ENCODE measurements at regions of chr17 and their contacts with region 1.

Region 1: GRCh38 chr17:50783193-50783660 is 15.9 kb upstream of the ANKRD40CL start:
- DNase-seq: peak; percentile 87
- H3K4me3 ChIP-seq: no peak overlapping the region
- H3K27ac ChIP-seq: no peak overlapping the region
- H3K4me1 ChIP-seq: peaks cover 5% of the 10 kb centered on the region
- H3K27me3 ChIP-seq: peaks cover 0 to 2% of the 10 kb centered on the region in 2 experiments
- CTCF ChIP-seq: peak; percentile 97 to 99
- POLR2A ChIP-seq: no peak

Region 2: GRCh38 chr17:50491505-50491904 is 291.7 kb before region 1 on chr17:
- CTCF ChIA-PET with region 1: no interaction called
- POLR2A ChIA-PET with region 1: no interaction called
- dilution Hi-C with region 1: no loop called
- intact Hi-C with region 1: no loop called
- DNase-seq: peak; percentile 32
- H3K4me3 ChIP-seq: no peak overlapping the region
- H3K27ac ChIP-seq: no peak overlapping the region
- H3K4me1 ChIP-seq: no peaks in the 10 kb centered on the region
- H3K27me3 ChIP-seq: peaks cover 0 to 2% of the 10 kb centered on the region in 2 experiments
- CTCF ChIP-seq: no peak
- POLR2A ChIP-seq: no peak

Region 3: GRCh38 chr17:50725769-50726655 is 57.2 kb before region 1 on chr17:
- CTCF ChIA-PET with region 1: no interaction called
- POLR2A ChIA-PET with region 1: no interaction called
- dilution Hi-C with region 1: no loop called
- intact Hi-C with region 1: no loop called
- DNase-seq: no peak
- H3K4me3 ChIP-seq: no peak overlapping the region
- H3K27ac ChIP-seq: no peak overlapping the region
- H3K4me1 ChIP-seq: peaks cover 18% of the 10 kb centered on the region
- H3K27me3 ChIP-seq: no peaks in the 10 kb centered on the region
- CTCF ChIP-seq: no peak
- POLR2A ChIP-seq: no peak

Region 4: GRCh38 chr17:50765454-50766221 is 17.6 kb before region 1 on chr17:
- CTCF ChIA-PET with region 1: interaction called, 30 read pairs
- POLR2A ChIA-PET with region 1: no interaction called
- dilution Hi-C with region 1: no loop called
- intact Hi-C with region 1: no loop called
- DNase-seq: peak; percentile 27
- H3K4me3 ChIP-seq: no peak overlapping the region
- H3K27ac ChIP-seq: no peak overlapping the region
- H3K4me1 ChIP-seq: no peaks in the 10 kb centered on the region
- H3K27me3 ChIP-seq: peaks cover 7 to 9% of the 10 kb centered on the region in 2 experiments
- CTCF ChIP-seq: no peak
- POLR2A ChIP-seq: no peak

Region 5: DNA sequence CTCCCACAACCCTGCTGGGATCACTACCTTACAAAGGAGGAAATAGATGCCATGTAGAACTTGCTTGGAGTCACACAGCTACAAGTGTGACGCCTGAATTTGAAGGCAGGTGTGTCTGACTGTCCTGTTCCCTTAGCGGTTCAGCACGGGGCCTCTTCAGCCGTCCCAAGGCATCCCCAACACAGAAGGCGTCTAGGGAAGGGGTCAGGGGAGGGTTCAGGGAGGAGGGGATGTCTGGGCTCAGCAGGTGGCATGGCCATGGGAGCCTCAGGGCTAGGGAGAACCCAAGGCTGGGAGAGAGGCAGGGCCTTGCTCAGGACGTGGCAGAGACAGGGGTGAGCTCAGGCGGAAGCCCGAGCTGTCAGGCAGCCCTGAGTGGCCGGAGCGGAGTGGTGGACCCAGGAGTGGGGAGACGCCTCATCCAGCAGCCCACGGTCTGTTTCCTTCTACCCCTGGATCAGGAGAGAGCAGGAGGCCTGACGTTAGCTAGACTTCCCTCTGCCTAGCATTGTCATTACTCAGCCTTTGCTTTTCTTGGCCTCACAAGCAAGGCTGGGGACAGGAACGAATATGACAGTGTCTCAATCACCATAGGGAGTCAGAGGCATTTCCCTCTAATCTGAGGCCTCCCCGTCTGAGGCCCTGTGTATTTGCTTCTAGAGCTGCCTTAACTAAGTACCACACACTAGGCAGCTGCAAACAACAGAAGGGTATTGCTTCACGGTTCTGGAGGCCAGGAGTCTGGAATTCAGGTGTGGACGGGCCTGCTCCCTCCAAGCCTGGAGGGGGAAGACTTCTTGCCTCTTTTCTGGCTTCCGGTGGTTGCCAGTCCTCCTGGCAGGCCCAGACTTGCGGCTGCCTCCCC is 15.4 kb after region 1 on chr17:
- CTCF ChIA-PET with region 1: interaction called, 42 read pairs
- POLR2A ChIA-PET with region 1: no interaction called
- dilution Hi-C with region 1: no loop called
- intact Hi-C with region 1: no loop called
- DNase-seq: no peak
- H3K4me3 ChIP-seq: no peak overlapping the region
- H3K27ac ChIP-seq: no peak overlapping the region
- H3K4me1 ChIP-seq: no peaks in the 10 kb centered on the region
- H3K27me3 ChIP-seq: no peaks in the 10 kb centered on the region
- CTCF ChIP-seq: no peak
- POLR2A ChIP-seq: no peak

Region 6: DNA sequence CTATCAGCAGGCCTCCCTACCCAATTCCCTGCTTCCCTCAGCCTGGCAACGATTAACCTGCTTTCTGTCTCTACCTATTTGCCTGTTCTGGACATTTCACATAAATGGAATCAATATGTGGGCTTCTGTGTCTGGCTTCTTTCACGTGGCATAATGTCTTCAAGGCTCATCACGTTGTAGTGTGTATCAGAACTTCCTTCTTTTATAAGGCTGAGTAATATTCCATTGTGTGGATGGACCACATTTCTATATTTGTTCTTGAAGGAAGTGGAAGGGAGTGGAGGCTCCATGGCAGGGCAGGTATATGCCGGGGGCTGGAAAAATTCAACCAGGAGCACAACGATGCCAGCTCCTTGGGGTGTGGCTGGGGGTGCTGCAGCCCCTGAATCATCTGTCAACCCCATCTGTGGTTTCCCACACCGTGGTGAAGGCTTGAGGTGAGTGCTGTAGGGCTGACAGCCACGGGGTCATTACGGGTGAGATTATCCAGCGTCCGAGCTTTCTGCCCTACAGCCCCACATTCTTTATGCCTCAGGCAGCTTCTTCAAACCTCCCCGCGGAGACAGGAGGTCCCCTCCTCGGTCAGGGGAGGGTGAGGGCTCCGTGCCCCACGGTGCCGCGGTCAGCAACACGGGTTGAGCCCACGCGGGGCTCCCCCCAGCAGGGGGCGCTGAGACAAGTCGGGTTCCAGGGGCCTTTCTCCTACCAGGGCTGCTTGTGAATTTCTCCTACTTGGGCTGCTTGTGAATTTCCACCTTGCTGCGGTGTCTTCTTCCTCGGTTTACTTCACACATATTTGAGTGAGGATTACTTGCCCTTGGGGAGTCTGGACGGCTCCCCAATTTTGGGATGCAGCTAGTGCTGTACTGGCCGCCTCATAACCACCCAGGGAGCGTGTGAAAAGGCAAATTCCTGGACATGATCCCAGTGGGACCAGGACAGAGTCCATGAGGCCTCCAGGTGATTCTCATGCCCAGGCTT is 33.8 kb after region 1 on chr17:
- CTCF ChIA-PET with region 1: interaction called, 19 read pairs
- POLR2A ChIA-PET with region 1: no interaction called
- dilution Hi-C with region 1: no loop called
- intact Hi-C with region 1: no loop called
- DNase-seq: no peak
- H3K4me3 ChIP-seq: no peak overlapping the region
- H3K27ac ChIP-seq: no peak overlapping the region
- H3K4me1 ChIP-seq: no peaks in the 10 kb centered on the region
- H3K27me3 ChIP-seq: peaks cover 0 to 5% of the 10 kb centered on the region in 2 experiments
- CTCF ChIP-seq: peak; percentile 84 to 93
- POLR2A ChIP-seq: no peak

Region 7: DNA sequence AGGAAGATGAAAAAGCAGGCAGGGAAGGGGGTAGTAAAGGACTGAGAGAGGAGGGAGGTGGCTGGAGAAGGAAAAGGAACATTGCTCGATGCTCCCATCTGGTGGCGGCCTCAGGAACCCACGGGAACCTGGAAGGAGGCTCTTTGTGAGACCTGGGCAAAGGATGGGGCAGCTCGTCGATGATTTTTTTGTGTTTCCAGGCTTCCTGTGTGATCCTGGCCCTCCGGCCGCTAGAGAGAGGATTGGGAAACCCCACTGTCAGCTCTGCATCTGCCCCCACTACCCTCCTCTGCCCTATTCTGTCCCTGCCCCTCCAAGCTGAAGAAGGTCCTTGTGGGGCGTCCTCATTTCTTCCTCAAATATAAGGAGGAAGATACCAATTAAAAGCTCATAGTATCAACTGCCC is 58.7 kb after region 1 on chr17:
- CTCF ChIA-PET with region 1: interaction called, 130 read pairs
- POLR2A ChIA-PET with region 1: no interaction called
- dilution Hi-C with region 1: no loop called
- intact Hi-C with region 1: loop called (anchors 1 kb)
- DNase-seq: peak; percentile 58
- H3K4me3 ChIP-seq: no peak overlapping the region
- H3K27ac ChIP-seq: no peak overlapping the region
- H3K4me1 ChIP-seq: no peaks in the 10 kb centered on the region
- H3K27me3 ChIP-seq: no peaks in the 10 kb centered on the region
- CTCF ChIP-seq: peak; percentile 79 to 90
- POLR2A ChIP-seq: no peak

Region 8: GRCh38 chr17:50949989-50950881 is 167.0 kb after region 1 on chr17:
- CTCF ChIA-PET with region 1: interaction called, 26 read pairs
- POLR2A ChIA-PET with region 1: no interaction called
- dilution Hi-C with region 1: no loop called
- intact Hi-C with region 1: loop called (anchors 1 kb)
- DNase-seq: peak; percentile 58
- H3K4me3 ChIP-seq: no peak overlapping the region
- H3K27ac ChIP-seq: no peak overlapping the region
- H3K4me1 ChIP-seq: peaks cover 7% of the 10 kb centered on the region
- H3K27me3 ChIP-seq: no peaks in the 10 kb centered on the region
- CTCF ChIP-seq: peak; percentile 61 to 78
- POLR2A ChIP-seq: no peak

Measured in endothelial cell of umbilical vein (primary cell).